BJ (cell line): ENCODE measurements at regions of chr1 and their contacts with region 1.

Region 1: GRCh38 chr1:245041058-245041698 is 113.6 kb upstream of the KIF26B start:
- DNase-seq: no peak
- H3K4me3 ChIP-seq: no peak overlapping the region
- H3K27me3 ChIP-seq: no peaks in the 10 kb centered on the region
- CTCF ChIP-seq: no peak

Region 2: GRCh38 chr1:244599937-244600350 is 441.2 kb before region 1 on chr1:
- CTCF ChIA-PET with region 1: interaction called, 15 read pairs
- POLR2A ChIA-PET with region 1: no interaction called
- DNase-seq: peak; percentile 77
- H3K4me3 ChIP-seq: peak overlapping the region; percentile 19; the same call in 1 of the 2 replicates
- H3K27me3 ChIP-seq: no peaks in the 10 kb centered on the region
- CTCF ChIP-seq: no peak

Region 3: GRCh38 chr1:244796718-244797406 is 244.3 kb before region 1 on chr1:
- CTCF ChIA-PET with region 1: interaction called, 31 read pairs
- POLR2A ChIA-PET with region 1: no interaction called
- DNase-seq: peak; percentile 4
- H3K4me3 ChIP-seq: no peak overlapping the region
- H3K27me3 ChIP-seq: no peaks in the 10 kb centered on the region
- CTCF ChIP-seq: peak; percentile 73

Region 4: GRCh38 chr1:244964112-244964971 is 76.8 kb before region 1 on chr1:
- CTCF ChIA-PET with region 1: interaction called, 15 read pairs
- POLR2A ChIA-PET with region 1: no interaction called
- DNase-seq: peak; percentile 71
- H3K4me3 ChIP-seq: peak overlapping the region; percentile 12
- H3K27me3 ChIP-seq: no peaks in the 10 kb centered on the region
- CTCF ChIP-seq: no peak

Region 5: DNA sequence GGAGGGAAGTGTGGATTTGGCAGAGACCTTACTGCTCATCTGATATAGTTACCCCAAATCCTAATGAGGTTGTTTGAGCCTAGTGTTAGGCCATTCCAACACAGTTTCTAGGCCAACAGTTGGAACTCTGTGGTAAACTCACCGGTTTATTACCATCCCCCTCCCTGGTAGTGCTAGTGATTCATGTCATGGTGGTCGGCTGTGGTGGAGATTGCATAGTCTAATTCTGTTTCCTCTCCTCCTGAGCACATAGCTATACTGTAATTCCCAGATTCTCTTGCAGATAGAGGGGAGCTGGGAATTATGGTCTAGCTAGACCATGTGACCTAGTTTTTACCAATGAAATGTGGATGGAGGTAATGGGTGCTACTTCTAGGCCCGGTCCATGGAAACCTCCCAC is 10.1 kb before region 1 on chr1:
- CTCF ChIA-PET with region 1: interaction called, 23 read pairs
- POLR2A ChIA-PET with region 1: interaction called, 4 read pairs
- DNase-seq: no peak
- H3K4me3 ChIP-seq: no peak overlapping the region
- H3K27me3 ChIP-seq: no peaks in the 10 kb centered on the region
- CTCF ChIP-seq: no peak

Region 6: DNA sequence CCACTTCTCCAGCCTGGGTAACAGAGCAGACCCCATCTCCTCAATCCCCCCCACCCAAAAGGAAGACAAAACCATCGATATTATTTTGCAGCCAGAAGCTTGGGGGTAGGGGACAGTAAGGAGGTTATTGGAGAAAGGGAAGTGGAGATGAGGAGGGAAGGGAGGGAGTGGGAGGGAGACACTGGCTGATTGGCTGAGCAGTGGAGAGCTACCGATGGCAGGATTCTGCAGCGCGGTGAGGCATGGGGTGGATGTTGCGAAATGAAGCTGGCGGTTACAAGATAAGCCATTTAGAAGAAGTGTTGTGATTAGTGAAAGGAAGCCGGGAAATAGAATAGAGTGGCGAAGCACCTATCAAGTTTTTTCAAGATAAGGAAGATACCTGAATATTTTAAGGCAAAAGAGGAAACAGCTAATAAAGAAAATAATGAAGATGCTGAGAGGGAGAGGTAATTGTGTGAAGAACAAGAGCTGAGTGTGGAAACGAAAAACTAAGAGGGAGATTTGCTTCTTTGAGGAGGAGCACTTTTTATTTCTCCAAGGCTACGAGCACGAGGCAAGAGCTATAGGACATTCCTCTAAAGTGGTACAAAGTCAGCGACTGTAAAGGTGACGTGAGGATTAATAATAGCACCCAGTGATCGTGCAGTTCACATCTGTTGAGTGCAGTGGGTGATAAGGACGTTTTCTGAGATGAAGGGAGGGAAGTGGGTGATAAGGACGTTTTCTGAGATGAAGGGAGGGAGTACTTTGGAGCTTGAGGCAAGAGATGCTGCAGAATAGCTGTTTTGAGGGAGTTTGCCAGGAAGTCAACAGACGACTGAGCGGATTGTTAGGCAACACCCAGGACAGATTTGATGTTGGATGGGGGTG is 10.4 kb after region 1 on chr1:
- CTCF ChIA-PET with region 1: interaction called, 16 read pairs
- POLR2A ChIA-PET with region 1: no interaction called
- DNase-seq: no peak
- H3K4me3 ChIP-seq: no peak overlapping the region
- H3K27me3 ChIP-seq: no peaks in the 10 kb centered on the region
- CTCF ChIP-seq: no peak

Region 7: GRCh38 chr1:245060684-245061374 is 19.7 kb after region 1 on chr1:
- CTCF ChIA-PET with region 1: interaction called, 18 read pairs
- POLR2A ChIA-PET with region 1: no interaction called
- DNase-seq: no peak
- H3K4me3 ChIP-seq: no peak overlapping the region
- H3K27me3 ChIP-seq: no peaks in the 10 kb centered on the region
- CTCF ChIP-seq: no peak